ENCODE measurements at regions of chr1 and their contacts with region 1.

Region 1: GRCh38 chr1:20947409-20947808 is 160.3 kb upstream of the HP1BP3 start:
- DNase-seq: no peak
- H3K4me3 ChIP-seq: no peak overlapping the region
- H3K27ac ChIP-seq: no peak overlapping the region
- H3K4me1 ChIP-seq: no peaks in the 10 kb centered on the region
- H3K27me3 ChIP-seq: no peaks in the 10 kb centered on the region
- CTCF ChIP-seq: no peak

Region 2: GRCh38 chr1:20932437-20932977 is 14.9 kb before region 1 on chr1:
- CTCF ChIA-PET with region 1: no interaction called
- POLR2A ChIA-PET with region 1: interaction called, 10 read pairs
- intact Hi-C with region 1: no loop called
- DNase-seq: no peak
- H3K4me3 ChIP-seq: no peak overlapping the region
- H3K27ac ChIP-seq: no peak overlapping the region
- H3K4me1 ChIP-seq: no peaks in the 10 kb centered on the region
- H3K27me3 ChIP-seq: no peaks in the 10 kb centered on the region
- CTCF ChIP-seq: no peak

Measured in PC-9 (cell line).